ENCODE measurements at regions of chr15 and their contacts with region 1.

Region 1: GRCh38 chr15:63157118-63157843 is at the start of gene RPS27L:
- DNase-seq: peak; percentile 81
- ATAC-seq: peak; percentile 95
- H3K4me3 Mint-ChIP-seq: peak within 1 kb of the TSS; percentile 98
- H3K27ac Mint-ChIP-seq: peak within 1 kb of the TSS; percentile 97
- H3K4me1 Mint-ChIP-seq: peaks cover 27% of the 10 kb centered on the region
- H3K27me3 Mint-ChIP-seq: no peaks in the 10 kb centered on the region
- CTCF ChIP-seq: no peak
- total RNA-seq, gene RPS27L: 70.8 and 74.9 TPM in 2 replicates

Region 2: DNA sequence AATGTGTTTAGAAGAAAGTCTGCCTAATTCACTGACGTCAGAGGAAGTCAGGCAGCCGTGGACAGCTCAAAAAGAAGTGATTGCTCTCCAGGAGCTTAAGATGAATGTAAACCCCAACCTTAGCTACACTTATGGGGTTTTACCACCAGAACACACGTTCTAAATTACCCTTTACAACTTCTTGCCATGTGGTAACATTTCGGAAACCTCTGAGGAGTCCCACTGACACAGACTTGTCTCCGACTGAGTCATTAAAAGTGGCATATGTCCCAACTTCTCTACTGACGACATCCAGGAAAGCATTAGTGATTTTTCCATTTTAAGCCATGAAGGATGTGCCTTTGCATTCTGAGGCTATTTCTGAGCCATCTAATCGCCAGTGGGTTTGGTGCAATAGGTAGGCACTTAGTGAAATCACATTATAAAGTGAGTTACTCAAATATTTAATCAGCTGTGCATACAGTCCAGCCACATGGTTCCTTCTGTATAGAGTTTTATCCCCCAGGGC is 1058.1 kb before region 1 on chr15:
- CTCF ChIA-PET with region 1: no interaction called
- POLR2A ChIA-PET with region 1: no interaction called
- intact Hi-C with region 1: no loop called
- DNase-seq: no peak
- ATAC-seq: no peak
- H3K4me3 Mint-ChIP-seq: no peak overlapping the region
- H3K27ac Mint-ChIP-seq: no peak overlapping the region
- H3K4me1 Mint-ChIP-seq: no peaks in the 10 kb centered on the region
- H3K27me3 Mint-ChIP-seq: peaks cover 12% of the 10 kb centered on the region
- CTCF ChIP-seq: no peak

Region 3: GRCh38 chr15:63122002-63122893 is 35.0 kb before region 1 on chr15:
- CTCF ChIA-PET with region 1: no interaction called
- POLR2A ChIA-PET with region 1: interaction called, 4 read pairs
- intact Hi-C with region 1: loop called (anchors 1 kb)
- DNase-seq: peak; percentile 77
- ATAC-seq: peak; percentile 88
- H3K4me3 Mint-ChIP-seq: peak overlapping the region; percentile 86
- H3K27ac Mint-ChIP-seq: peak overlapping the region; percentile 86
- H3K4me1 Mint-ChIP-seq: peaks cover 15% of the 10 kb centered on the region
- H3K27me3 Mint-ChIP-seq: no peaks in the 10 kb centered on the region
- CTCF ChIP-seq: no peak

Region 4: GRCh38 chr15:63212050-63213004 is 55.0 kb after region 1 on chr15:
- CTCF ChIA-PET with region 1: interaction called, 3 read pairs
- POLR2A ChIA-PET with region 1: interaction called, 10 read pairs
- intact Hi-C with region 1: loop called (anchors 1 kb)
- DNase-seq: no peak
- ATAC-seq: peak; percentile 59
- H3K4me3 Mint-ChIP-seq: peak overlapping the region; percentile 76
- H3K27ac Mint-ChIP-seq: peak overlapping the region; percentile 94
- H3K4me1 Mint-ChIP-seq: peaks cover 77% of the 10 kb centered on the region
- H3K27me3 Mint-ChIP-seq: no peaks in the 10 kb centered on the region
- CTCF ChIP-seq: no peak

Region 5: GRCh38 chr15:63234451-63234870 is 77.2 kb after region 1 on chr15:
- CTCF ChIA-PET with region 1: no interaction called
- POLR2A ChIA-PET with region 1: interaction called, 14 read pairs
- intact Hi-C with region 1: loop called (anchors 5 kb)
- DNase-seq: no peak
- ATAC-seq: no peak
- H3K4me3 Mint-ChIP-seq: peak overlapping the region; percentile 56
- H3K27ac Mint-ChIP-seq: peak overlapping the region; percentile 59
- H3K4me1 Mint-ChIP-seq: peaks cover 68% of the 10 kb centered on the region
- H3K27me3 Mint-ChIP-seq: no peaks in the 10 kb centered on the region
- CTCF ChIP-seq: no peak

Region 6: GRCh38 chr15:63402498-63403253 is 245.4 kb after region 1 on chr15:
- CTCF ChIA-PET with region 1: no interaction called
- POLR2A ChIA-PET with region 1: no interaction called
- intact Hi-C with region 1: loop called (anchors 5 kb)
- DNase-seq: no peak
- ATAC-seq: peak; percentile 34
- H3K4me3 Mint-ChIP-seq: no peak overlapping the region
- H3K27ac Mint-ChIP-seq: no peak overlapping the region
- H3K4me1 Mint-ChIP-seq: peaks cover 8% of the 10 kb centered on the region
- H3K27me3 Mint-ChIP-seq: no peaks in the 10 kb centered on the region
- CTCF ChIP-seq: no peak

Measured in activated B cell treated with CpG ODN at 0.5 μM for 24 hours (primary cell).